Activated T-helper 2 cell treated with anti-CD3 and anti-CD28 coated beads, Interferon-gamma antibody, Interleukin-2, Interleukin-4, amounts not matched to agents 10 μg/mL and 5 μg/mL and 100 μg/mL, durations not matched to agents 14 hours and 24 hours and 36 hours (primary cell): ENCODE measurements at regions of chr12 and their contacts with region 1.

Region 1: GRCh38 chr12:56315622-56316473 is at the start of gene CNPY2:
- DNase-seq: peak; percentile 88
- H3K4me3 Mint-ChIP-seq: peak within 1 kb of the TSS; percentile 99
- H3K27ac Mint-ChIP-seq: peak within 1 kb of the TSS; percentile 98
- H3K4me1 Mint-ChIP-seq: peaks cover 6% of the 10 kb centered on the region
- H3K27me3 Mint-ChIP-seq: no peaks in the 10 kb centered on the region
- total RNA-seq, gene CNPY2: 160 and 165 TPM in 2 replicates

Region 2: GRCh38 chr12:56339158-56339422 is 23.2 kb after region 1 on chr12:
- intact Hi-C with region 1: no loop called
- DNase-seq: no peak
- H3K4me3 Mint-ChIP-seq: peak overlapping the region; percentile 88
- H3K27ac Mint-ChIP-seq: peak overlapping the region; percentile 99
- H3K4me1 Mint-ChIP-seq: peaks cover 33% of the 10 kb centered on the region
- H3K27me3 Mint-ChIP-seq: no peaks in the 10 kb centered on the region

Region 3: DNA sequence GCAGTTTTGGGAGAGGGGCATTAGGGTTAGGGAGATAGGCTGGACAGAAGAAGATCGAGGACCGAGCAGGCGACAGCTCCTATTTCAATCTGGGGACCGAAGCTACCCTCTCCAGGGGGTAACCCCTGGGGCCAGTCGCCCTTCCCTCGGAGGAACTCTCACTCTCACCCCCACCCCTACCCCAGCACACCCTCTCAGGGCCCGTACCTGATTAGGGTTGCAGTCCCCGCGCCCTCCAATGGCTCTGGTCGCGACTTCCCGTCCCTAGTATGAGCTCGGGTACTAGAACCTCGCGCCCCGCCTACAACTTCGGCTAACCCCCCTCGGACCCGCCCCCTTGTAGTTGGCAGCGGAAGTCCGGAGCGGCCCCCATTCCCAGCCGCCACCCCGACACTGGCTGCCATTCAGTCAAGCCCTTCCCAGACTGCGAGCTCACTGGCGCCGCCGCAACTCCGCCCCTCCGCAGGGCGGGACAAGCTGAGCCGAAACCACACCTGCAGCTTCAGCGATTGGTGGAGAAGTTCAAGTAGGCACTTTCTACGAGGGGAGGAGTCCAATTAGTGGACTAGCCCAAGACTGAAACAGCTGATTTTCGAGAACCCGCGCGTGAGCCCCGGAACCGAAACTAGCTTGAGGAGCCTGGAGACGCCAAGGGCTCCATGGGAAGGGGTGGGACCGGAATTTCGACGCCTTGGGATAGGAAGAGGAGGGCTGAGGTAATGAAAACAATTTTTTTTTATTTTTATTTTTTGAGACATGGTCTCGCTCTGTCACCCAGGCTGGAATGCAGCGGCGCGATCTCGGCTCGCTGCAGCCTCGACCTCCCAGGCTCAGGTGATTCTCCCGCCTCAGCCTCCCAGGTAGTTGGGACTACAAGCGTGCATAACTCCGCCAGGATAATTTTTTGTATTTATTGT is 44.3 kb after region 1 on chr12 and contains the start of gene STAT2:
- intact Hi-C with region 1: loop called (anchors 1 kb)
- DNase-seq: peak; percentile 100
- H3K4me3 Mint-ChIP-seq: peak within 1 kb of the TSS; percentile 89
- H3K27ac Mint-ChIP-seq: peak within 1 kb of the TSS; percentile 90
- H3K4me1 Mint-ChIP-seq: peaks cover 24% of the 10 kb centered on the region
- H3K27me3 Mint-ChIP-seq: no peaks in the 10 kb centered on the region
- total RNA-seq, gene STAT2: 70.3 and 75.0 TPM in 2 replicates

Region 4: GRCh38 chr12:56413392-56413791 is 97.5 kb after region 1 on chr12:
- intact Hi-C with region 1: no loop called
- DNase-seq: no peak
- H3K4me3 Mint-ChIP-seq: no peak overlapping the region
- H3K27ac Mint-ChIP-seq: no peak overlapping the region
- H3K4me1 Mint-ChIP-seq: no peaks in the 10 kb centered on the region
- H3K27me3 Mint-ChIP-seq: no peaks in the 10 kb centered on the region

Region 5: DNA sequence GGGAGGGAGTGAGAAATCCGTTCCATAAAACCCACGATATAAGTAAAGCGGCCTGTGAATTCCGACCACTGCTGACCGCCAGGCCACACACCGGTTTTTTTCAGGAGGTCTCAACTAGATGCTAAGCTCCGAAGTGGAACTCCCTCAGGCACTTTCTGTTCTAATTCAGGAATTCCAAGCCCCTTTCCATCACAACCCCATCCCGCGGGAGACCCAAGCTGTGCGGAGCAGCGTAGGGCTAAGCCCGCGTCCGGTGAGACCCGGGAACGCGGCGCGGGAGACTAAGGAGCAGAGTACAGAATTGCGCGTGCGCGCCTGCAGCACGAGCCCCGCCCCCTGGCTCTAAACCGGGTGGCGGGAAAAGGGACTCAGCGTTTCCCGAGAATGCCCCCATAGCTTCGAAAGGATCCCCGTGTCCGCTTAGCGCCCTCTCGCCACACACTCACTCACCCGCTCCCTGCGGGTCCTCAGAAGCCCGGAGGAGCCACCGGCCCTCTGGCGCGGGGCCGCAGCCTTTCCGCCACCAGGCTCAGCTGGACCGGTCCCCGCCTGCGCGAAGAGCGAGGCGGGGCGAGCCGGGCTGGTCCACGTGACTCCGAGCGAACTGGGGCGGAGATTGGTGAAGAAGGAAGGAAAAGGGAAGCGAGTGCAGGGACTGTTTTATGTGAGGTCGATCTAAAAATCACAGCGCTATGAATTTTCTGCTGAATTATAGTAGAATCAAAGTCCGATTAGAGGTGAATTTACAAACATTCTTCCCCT is 133.2 kb after region 1 on chr12 and contains the start of gene TIMELESS:
- intact Hi-C with region 1: loop called (anchors 5 kb)
- DNase-seq: peak; percentile 88
- H3K4me3 Mint-ChIP-seq: peak within 1 kb of the TSS; percentile 86
- H3K27ac Mint-ChIP-seq: peak within 1 kb of the TSS; percentile 86
- H3K4me1 Mint-ChIP-seq: peaks cover 24% of the 10 kb centered on the region
- H3K27me3 Mint-ChIP-seq: no peaks in the 10 kb centered on the region
- total RNA-seq, gene TIMELESS: 43.7 and 45.6 TPM in 2 replicates

Region 6: DNA sequence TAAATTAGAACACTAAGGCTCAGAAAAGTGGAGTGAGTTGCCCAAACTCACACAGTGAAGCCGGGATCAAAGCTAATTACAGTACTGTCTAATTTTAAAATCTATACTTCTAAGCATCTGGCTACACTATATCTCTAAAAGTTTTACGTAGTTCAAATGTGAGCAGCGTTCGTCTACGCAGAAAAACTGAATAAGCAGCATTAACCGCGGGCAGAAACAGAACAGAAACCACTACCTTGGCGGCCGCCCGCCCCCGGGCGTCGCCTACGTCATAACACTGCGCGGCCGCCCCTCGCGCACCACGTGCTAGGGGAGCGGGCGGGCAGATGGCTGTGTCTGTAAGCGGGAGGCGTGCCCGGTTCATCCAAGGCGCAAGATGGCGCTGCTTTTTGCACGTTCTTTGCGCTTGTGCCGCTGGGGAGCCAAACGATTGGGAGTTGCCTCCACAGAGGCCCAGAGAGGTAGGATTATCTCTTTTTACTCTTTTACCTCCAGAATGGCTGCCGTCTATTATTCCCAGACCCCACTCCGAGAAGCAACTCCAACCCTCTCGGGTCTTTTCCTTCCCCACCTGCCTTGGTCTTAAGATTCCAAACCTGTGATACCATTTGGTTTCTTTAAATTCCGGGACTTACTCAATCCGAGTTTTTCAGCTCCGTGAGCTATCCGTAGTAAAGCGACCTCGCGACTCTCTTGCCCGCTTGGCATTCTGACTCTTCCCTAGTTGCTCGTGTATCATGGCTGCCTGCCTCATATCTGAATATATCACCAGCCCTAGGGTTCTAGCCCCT is 152.6 kb after region 1 on chr12 and contains the start of gene SPRYD4:
- intact Hi-C with region 1: loop called (anchors 1 kb)
- DNase-seq: peak; percentile 93
- H3K4me3 Mint-ChIP-seq: peak within 1 kb of the TSS; percentile 98
- H3K27ac Mint-ChIP-seq: peak within 1 kb of the TSS; percentile 98
- H3K4me1 Mint-ChIP-seq: peaks cover 18% of the 10 kb centered on the region
- H3K27me3 Mint-ChIP-seq: no peaks in the 10 kb centered on the region
- total RNA-seq, gene SPRYD4: 4.4 and 4.5 TPM in 2 replicates